SK-N-SH (cell line): ENCODE measurements at regions of chr3 and their contacts with region 1.

Region 1: DNA sequence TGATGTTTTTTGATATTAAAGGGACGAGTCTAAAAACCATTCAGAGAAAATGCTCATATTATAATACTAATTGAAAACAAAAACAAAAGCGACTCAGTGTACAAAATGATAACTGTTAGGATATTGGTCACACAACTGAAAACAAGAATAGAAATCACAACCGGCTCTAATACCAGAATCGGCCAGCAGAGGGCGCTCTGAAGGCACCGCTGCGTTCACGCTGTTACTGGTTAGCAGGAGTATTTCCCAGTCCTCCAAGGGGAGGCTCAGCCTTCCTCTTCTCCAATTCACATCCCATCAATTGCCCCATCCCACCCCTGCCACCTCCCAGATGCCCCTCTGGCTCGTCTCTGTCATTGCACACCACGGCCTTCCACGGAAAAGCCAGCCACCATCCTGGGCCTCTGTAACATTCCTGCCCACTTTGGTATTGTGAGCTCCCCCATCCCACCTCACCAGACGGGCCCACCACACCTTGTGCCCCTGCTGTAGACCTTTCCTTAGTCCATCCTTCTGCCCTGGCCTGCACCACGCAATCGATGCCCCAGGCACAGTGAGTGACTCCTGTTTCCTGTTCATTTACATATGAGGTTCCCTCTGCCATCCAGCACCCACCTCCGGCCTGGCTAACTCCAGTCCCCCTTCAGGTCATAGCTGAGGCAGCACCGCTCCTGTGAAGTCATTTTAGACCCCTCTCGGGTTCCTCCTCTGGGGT is 8.5 kb downstream of the FAM107A start:
- DNase-seq: peak; percentile 72
- H3K4me3 ChIP-seq: no peak overlapping the region; a peak in 1 of 4 replicates
- H3K27ac ChIP-seq: no peak overlapping the region
- H3K4me1 ChIP-seq: peaks cover 4 to 13% of the 10 kb centered on the region in 2 experiments; a peak in 1 of 4 replicates
- H3K27me3 ChIP-seq: no peaks in the 10 kb centered on the region
- CTCF ChIP-seq: peak; percentile 94
- EP300 ChIP-seq: no peak
- RAD21 ChIP-seq: peak; percentile 84

Region 2: DNA sequence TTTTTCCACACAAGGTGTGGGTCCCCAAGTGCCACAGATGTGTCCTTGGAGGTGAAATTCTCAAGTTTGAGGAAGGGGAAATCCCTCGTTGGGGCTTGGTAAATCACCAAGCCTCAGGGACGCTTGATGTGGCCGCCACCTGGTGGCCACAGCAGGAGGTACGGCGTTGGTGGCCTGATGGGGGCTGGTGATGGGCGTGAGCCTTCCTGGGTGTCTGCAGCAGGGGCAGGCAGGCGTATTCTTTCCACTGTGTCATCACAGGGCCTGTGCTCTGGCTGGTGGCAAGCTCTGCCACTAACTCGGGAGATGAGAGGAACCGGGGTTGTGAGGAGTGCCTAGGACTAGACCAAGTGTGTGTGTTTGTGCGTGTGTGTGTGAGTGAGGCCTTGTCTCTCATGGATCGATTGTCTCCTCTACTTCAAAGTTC is 35.9 kb before region 1 on chr3:
- CTCF ChIA-PET with region 1: interaction called, 12 read pairs
- POLR2A ChIA-PET with region 1: no interaction called
- DNase-seq: peak; percentile 89
- H3K4me3 ChIP-seq: peak overlapping the region in 1 of 2 experiments; percentile 17; a peak in 1 of 4 replicates
- H3K27ac ChIP-seq: no peak overlapping the region
- H3K4me1 ChIP-seq: peaks cover 12 to 32% of the 10 kb centered on the region in 2 experiments
- H3K27me3 ChIP-seq: no peaks in the 10 kb centered on the region
- CTCF ChIP-seq: peak; percentile 90
- EP300 ChIP-seq: no peak
- RAD21 ChIP-seq: peak; percentile 92

Region 3: DNA sequence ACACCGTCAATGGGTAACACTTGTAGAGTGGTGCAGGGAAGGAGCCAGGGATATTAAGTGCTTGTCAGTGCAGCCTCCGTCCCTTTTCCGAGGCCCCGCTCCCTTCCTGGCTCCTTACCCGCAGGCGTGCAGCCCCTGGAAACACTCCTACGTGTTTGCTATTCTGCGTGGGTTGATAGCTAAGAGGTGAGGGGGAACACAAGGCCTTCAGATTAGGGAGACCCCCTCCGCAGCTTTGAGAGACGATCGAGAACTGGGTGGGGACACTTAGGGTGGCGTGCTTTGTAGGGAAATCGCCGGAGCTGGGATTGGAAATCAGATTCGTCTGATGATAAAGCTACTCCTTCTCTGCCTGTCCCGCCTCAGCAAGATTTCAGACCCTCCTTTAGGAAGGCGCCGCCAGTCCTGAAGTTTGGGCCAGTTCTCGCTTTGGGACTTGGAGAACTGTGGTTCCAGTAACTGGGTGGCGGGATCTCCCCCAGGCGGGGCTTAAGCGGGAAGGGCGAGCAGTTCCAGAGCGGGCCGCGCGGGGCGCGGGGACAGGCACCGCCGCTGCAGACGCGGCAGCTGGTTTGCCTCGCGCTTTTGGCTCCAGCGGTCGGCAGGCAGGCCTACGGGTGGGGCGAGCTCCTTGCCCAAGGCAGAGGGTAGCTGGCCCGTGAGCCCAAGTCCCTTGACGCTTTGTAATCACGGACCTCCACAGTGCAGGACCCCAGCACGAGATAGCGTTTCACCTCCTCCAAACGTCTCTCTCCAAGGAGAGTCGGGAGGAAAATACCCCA is 16.5 kb after region 1 on chr3:
- CTCF ChIA-PET with region 1: interaction called, 27 read pairs
- POLR2A ChIA-PET with region 1: no interaction called
- DNase-seq: peak; percentile 94
- H3K4me3 ChIP-seq: peak overlapping the region; percentile 29 to 52
- H3K27ac ChIP-seq: no peak overlapping the region
- H3K4me1 ChIP-seq: peaks cover 0 to 6% of the 10 kb centered on the region in 2 experiments; a peak in 1 of 4 replicates
- H3K27me3 ChIP-seq: no peaks in the 10 kb centered on the region; the same call in 1 of the 2 replicates
- CTCF ChIP-seq: peak; percentile 58
- EP300 ChIP-seq: no peak
- RAD21 ChIP-seq: peak; percentile 23

Region 4: DNA sequence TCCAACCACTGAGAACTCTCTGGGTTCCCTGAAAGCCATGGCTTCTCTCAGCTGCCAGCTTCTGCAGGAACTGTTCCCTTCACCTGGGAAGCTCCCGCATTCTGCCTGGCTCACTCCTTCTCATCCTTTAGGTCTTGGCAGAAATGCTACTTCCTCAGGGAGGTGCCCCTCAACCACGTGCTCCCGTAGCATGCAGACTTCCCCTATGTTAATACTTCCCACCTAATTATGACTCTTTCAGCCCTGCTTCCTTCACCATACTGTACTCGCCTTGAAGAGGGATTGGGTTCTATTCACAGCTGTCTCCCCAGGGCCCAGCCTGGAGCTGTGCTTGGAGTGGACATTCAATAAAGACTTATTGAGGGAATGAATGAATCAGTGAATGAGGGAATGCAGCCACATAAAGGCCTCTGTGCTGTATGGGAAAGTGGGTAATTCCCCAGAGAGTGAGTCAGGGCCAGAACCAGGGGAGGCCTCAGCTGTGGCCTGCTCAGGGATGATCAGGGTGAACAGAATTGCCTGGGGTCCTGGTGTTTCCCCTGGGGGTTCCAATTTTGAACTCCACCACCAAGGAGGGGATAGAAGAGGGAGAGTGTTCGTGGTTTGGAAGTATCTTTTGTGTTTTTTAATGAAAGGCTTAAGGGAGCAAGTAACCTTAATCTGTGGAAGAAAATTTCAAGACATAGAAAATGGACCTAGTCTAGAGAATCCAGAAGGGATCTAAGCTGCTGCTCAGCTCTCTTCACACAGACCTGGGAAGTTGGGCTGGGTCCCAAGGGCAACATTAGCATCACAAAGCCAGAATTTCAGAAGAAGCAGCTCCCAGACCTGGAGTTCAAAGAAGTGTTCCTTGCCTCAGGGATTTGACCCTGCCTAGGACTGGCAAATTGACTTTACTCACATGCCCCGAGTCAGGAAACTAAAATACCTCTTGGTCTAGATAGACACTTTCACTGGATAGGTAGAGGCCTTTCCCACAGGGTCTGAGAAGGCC is 23.1 kb after region 1 on chr3:
- CTCF ChIA-PET with region 1: interaction called, 27 read pairs
- POLR2A ChIA-PET with region 1: no interaction called
- DNase-seq: no peak
- H3K4me3 ChIP-seq: no peak overlapping the region
- H3K27ac ChIP-seq: no peak overlapping the region
- H3K4me1 ChIP-seq: no peaks in the 10 kb centered on the region
- H3K27me3 ChIP-seq: no peaks in the 10 kb centered on the region; the same call in 1 of the 2 replicates
- CTCF ChIP-seq: no peak
- EP300 ChIP-seq: no peak
- RAD21 ChIP-seq: no peak

Region 5: DNA sequence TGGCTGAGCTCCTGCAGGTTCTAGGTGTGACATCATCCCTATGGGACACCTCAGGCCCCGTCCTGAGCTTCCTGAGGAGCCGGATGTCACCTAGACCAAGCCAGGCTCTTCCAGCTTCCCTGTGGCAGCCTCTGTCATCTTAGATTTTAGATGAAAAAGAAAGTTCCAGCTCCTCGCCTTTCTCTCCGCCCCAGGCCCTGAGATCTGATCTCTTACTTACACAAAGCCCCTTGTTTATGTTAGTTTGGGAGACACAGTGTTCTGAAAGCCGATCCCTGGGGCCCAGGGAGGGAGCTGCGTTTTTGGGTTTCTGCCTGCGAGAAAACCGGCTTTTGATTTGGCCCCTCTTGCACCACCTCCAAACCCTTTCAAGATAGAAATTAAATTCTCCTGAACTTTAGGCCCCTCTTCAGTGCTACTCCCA is 48.6 kb after region 1 on chr3:
- CTCF ChIA-PET with region 1: interaction called, 446 read pairs
- POLR2A ChIA-PET with region 1: no interaction called
- DNase-seq: no peak
- H3K4me3 ChIP-seq: no peak overlapping the region
- H3K27ac ChIP-seq: no peak overlapping the region
- H3K4me1 ChIP-seq: peaks cover 0 to 3% of the 10 kb centered on the region in 2 experiments; a peak in 1 of 4 replicates
- H3K27me3 ChIP-seq: no peaks in the 10 kb centered on the region
- CTCF ChIP-seq: no peak
- EP300 ChIP-seq: no peak
- RAD21 ChIP-seq: no peak